Activated CD4-positive, alpha-beta T cell treated with anti-CD3 and anti-CD28 coated beads, Interleukin-2, amount 10 ng/mL, durations not matched to agents 24 days and 14 days (primary cell): ENCODE measurements at regions of chr2 and their contacts with region 1.

Region 1: GRCh38 chr2:8681786-8682692 is at the start of gene ID2:
- DNase-seq: peak; percentile 100
- H3K4me3 Mint-ChIP-seq: peak within 1 kb of the TSS; percentile 98
- H3K27ac Mint-ChIP-seq: peak within 1 kb of the TSS; percentile 97
- H3K4me1 Mint-ChIP-seq: peaks cover 37% of the 10 kb centered on the region
- H3K27me3 Mint-ChIP-seq: peaks cover 13% of the 10 kb centered on the region
- total RNA-seq, gene ID2: 284 and 299 TPM in 2 replicates

Region 2: GRCh38 chr2:7427293-7428060 is 1254.6 kb before region 1 on chr2:
- intact Hi-C with region 1: loop called (anchors 1 kb)
- DNase-seq: peak; percentile 86
- H3K4me3 Mint-ChIP-seq: peak overlapping the region; percentile 27
- H3K27ac Mint-ChIP-seq: peak overlapping the region; percentile 83
- H3K4me1 Mint-ChIP-seq: peaks cover 42% of the 10 kb centered on the region
- H3K27me3 Mint-ChIP-seq: no peaks in the 10 kb centered on the region

Region 3: DNA sequence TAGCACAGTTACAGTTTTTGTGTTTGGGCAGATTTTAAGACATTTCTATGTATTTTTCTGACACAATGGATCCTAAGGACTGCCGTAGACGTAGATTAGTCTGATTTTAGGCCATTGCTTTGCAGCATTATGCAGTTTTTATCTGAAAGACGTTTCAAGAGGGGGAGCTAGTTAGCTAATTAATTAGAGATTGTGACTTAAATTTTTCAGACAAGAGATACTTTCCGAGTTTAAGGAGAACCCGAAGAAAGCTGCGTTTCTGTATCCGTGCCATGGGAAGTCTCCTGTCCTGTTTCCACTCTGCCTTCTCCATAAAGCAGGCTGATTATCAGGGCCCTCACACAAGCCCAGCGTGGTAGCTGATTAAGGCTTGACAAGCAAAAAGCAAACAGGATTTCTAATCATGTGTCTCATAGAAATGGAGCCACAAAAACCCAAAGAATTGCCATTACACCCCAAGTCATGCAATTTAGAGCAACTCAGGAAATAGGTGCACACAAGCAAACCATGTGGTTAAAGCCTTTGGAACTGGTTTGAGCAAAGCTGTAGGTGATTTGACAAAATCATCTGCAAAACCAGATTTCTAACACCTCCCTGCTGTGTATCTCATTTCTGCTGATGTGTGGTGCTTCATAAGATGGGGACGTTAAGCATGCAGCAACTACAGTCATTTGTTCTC is 956.7 kb before region 1 on chr2:
- intact Hi-C with region 1: loop called (anchors 2 kb)
- DNase-seq: peak; percentile 88
- H3K4me3 Mint-ChIP-seq: peak overlapping the region; percentile 87
- H3K27ac Mint-ChIP-seq: peak overlapping the region; percentile 92
- H3K4me1 Mint-ChIP-seq: peaks cover 53% of the 10 kb centered on the region
- H3K27me3 Mint-ChIP-seq: no peaks in the 10 kb centered on the region

Region 4: GRCh38 chr2:7930800-7931635 is 751.0 kb before region 1 on chr2:
- intact Hi-C with region 1: loop called (anchors 5 kb)
- DNase-seq: peak; percentile 54
- H3K4me3 Mint-ChIP-seq: peak overlapping the region; percentile 1
- H3K27ac Mint-ChIP-seq: peak overlapping the region; percentile 76
- H3K4me1 Mint-ChIP-seq: peaks cover 10% of the 10 kb centered on the region
- H3K27me3 Mint-ChIP-seq: no peaks in the 10 kb centered on the region

Region 5: DNA sequence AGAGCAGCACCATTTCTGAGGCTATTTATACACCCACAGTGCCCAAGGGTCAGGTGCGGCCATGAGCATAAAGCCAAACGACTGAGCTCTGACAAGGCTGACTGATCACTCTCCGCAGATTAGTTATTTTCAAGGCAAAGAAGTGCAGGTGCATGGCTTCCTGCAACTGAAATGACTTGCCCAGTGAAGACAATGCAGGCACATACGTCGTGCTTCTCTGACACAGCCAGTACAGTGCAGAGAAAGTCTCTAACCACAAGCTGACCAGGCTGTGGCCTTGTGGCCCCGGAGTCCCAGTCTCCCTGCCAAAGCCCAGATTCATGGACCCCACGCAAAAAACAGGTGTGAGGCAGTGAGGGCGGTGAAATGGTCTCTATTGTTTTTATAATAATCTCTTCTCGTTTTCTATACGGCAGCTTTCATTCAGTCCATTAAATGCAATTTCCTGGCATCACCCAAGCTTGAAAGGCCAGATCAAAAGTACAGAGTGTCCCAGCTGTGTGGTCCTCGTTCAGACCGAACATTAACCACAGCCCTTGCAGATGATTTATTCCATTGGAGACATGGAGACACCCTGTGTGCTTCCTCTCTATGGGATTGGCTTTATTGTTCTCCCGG is 447.2 kb before region 1 on chr2:
- intact Hi-C with region 1: loop called (anchors 10 kb)
- DNase-seq: no peak
- H3K4me3 Mint-ChIP-seq: no peak overlapping the region
- H3K27ac Mint-ChIP-seq: no peak overlapping the region
- H3K4me1 Mint-ChIP-seq: peaks cover 22% of the 10 kb centered on the region
- H3K27me3 Mint-ChIP-seq: peaks cover 1% of the 10 kb centered on the region

Region 6: DNA sequence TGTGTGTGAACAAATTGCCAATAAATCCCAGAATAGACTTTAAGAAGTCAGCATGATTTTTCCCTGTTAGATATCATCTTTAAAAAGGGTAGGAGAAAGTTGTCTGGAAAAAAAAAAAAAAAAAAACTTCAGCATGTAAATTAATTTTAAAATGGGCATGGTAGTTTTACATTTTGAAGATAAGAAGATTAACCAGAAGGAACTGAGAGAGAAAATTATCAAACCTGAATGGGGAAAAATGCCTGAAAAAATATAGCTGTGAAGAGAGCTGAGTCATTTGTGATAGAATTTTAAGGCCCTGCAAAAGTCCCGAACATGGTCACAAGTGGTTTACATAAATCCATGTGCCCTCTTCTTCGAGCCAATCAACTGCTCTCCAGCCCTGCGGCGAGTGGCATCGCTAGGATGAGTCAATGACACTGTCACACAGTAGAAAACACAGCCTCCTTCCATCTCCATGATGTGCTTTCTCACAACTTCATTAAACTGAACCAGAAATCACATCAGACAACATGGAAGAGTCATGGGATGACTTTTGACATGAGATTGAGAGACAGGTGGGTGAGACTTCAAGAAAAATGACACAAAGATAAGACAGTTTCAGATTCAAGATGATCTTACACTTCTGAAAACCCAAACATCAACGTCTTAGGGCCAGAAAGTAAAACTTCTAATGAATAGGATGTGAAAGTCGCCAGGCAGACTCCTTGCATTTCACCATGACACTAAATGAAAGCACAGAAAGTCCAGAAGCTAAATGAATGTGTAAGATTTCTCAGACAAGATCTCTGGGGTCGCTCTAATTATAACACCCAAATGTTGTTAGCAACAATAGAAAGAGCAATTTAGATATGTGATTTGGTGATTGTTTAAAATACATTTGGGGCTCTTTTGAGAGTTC is 273.2 kb before region 1 on chr2:
- intact Hi-C with region 1: loop called (anchors 1 kb)
- DNase-seq: peak; percentile 82
- H3K4me3 Mint-ChIP-seq: peak overlapping the region; percentile 11
- H3K27ac Mint-ChIP-seq: peak overlapping the region; percentile 85
- H3K4me1 Mint-ChIP-seq: peaks cover 26% of the 10 kb centered on the region
- H3K27me3 Mint-ChIP-seq: peaks cover 5% of the 10 kb centered on the region

Region 7: DNA sequence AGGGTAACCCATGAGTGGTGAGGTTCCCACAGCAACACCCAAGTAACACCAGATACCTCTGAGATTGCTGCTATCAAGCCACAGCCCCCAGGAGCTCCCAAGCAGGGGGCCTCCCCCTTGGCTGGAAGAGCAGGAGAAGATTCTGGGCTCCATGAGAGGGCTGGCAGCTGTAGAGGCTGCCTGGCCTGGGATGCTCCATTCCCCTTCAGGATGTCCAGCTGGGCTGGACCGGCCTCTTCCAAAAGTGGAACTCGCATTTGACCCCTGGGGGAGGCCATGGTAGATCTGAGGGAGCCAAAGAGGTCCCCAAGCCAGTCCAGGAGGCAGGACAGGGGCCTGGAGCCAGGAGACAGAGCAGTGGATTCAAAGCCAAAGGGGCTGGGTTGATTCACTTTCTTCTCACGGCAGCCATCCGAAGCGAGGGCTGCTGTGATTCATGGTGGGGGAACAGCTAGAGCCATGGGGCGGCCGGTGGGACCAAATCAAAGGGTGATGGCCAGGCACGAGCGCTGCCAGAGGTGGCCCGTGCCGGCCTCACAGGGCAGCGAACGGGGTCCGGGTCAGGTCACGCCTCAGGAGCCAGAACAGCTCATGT is 95.5 kb before region 1 on chr2:
- intact Hi-C with region 1: loop called (anchors 2 kb)
- DNase-seq: no peak
- H3K4me3 Mint-ChIP-seq: peak overlapping the region; percentile 17
- H3K27ac Mint-ChIP-seq: peak overlapping the region; percentile 58
- H3K4me1 Mint-ChIP-seq: peaks cover 36% of the 10 kb centered on the region
- H3K27me3 Mint-ChIP-seq: peaks cover 15% of the 10 kb centered on the region